Activated naive CD4-positive, alpha-beta T cell treated with anti-CD3 and anti-CD28 coated beads, Interleukin-2, amount 10 ng/mL, durations not matched to agents 7 days and 5 days (primary cell): ENCODE measurements at regions of chr1 and their contacts with region 1.

Region 1: DNA sequence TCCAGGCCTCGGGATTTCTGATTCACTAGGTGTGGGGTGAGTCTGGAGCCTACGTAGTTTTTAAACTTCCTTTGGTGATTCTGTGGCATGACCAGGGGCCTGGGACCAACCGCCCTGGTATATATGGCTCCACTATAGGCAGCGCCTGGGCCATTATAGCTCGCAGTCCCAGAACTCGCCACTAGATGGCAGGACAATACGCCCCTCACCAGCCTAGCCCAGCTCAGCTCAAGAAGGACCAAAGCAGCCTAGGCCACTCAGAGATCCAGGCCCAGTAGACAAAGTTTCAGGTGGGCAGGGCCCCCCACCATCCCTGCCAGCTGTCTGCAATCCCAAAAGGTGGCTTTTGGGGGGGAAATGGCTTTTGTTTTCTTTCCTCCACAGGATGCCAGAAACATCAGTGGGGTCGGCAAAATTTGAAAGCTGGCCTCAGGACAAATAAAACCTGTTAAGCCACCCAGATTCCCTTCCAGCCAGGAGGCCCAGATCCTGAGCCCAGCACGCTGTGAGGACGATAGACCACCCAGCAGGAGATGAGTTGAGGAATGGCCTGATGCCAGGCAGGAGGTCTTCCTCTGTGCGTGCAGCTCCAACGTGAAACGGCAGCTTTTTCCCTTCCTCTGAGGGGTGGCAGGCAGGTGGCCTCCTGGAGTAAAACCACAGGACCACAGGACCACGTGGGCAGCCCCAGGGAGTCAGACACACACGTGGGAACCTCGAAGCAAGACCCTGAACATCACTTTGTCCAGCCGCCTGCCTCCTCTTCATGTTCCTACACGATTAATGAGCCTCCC is 24.8 kb upstream of the TMEM51 start:
- DNase-seq: peak; percentile 80
- H3K4me3 Mint-ChIP-seq: no peak overlapping the region
- H3K27ac Mint-ChIP-seq: no peak overlapping the region
- H3K4me1 Mint-ChIP-seq: no peaks in the 10 kb centered on the region
- H3K27me3 Mint-ChIP-seq: peaks cover 29% of the 10 kb centered on the region

Region 2: GRCh38 chr1:15014516-15014915 is 114.2 kb before region 1 on chr1:
- CTCF ChIA-PET with region 1: no interaction called
- DNase-seq: no peak
- H3K4me3 Mint-ChIP-seq: no peak overlapping the region
- H3K27ac Mint-ChIP-seq: no peak overlapping the region
- H3K4me1 Mint-ChIP-seq: no peaks in the 10 kb centered on the region
- H3K27me3 Mint-ChIP-seq: peaks cover 4% of the 10 kb centered on the region

Region 3: DNA sequence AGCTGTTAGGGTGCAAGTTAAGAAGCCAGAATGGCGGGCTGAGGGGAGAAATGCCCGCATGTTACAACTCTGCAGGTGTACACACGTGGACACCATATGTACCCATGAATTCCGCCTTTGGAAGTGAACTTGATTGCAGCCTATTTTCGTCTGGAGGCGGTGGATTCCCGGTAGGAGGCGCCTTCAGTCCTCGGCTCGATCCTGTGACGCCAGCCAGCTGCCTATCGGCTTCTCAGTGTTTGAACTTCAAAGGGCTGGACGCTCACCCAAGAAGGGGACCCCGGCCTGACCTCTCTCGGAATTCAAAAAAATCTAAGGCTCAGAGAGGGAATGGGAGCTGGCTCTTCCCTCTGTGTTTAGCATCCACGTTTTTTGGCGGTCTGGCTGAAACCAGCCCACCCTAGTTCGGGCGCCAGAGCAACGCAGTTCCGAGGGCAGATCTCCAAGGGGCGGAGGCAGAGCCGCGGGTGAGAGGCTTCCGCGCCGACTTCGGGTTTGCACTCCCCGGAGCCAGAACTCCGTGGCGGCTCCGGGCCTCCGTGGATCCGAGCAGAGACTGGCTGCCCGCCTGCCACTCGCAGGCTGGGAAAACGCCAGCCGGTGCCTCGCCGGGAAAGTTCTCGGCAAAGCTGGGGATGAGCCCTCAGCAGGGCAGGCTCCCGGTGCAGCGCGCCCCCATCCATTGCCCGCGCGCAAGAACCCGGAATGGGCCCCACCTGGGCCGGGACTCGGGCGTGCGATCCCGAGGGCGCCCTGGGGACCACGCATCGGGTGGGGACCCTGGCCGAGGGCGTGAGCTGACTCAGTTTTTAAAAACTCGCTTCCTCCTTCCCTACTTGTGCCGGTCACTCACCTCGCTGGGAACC is 23.8 kb after region 1 on chr1:
- CTCF ChIA-PET with region 1: interaction called, 19 read pairs
- DNase-seq: peak; percentile 46
- H3K4me3 Mint-ChIP-seq: peak overlapping the region; percentile 41
- H3K27ac Mint-ChIP-seq: no peak overlapping the region
- H3K4me1 Mint-ChIP-seq: peaks cover 36% of the 10 kb centered on the region
- H3K27me3 Mint-ChIP-seq: peaks cover 87% of the 10 kb centered on the region

Region 4: DNA sequence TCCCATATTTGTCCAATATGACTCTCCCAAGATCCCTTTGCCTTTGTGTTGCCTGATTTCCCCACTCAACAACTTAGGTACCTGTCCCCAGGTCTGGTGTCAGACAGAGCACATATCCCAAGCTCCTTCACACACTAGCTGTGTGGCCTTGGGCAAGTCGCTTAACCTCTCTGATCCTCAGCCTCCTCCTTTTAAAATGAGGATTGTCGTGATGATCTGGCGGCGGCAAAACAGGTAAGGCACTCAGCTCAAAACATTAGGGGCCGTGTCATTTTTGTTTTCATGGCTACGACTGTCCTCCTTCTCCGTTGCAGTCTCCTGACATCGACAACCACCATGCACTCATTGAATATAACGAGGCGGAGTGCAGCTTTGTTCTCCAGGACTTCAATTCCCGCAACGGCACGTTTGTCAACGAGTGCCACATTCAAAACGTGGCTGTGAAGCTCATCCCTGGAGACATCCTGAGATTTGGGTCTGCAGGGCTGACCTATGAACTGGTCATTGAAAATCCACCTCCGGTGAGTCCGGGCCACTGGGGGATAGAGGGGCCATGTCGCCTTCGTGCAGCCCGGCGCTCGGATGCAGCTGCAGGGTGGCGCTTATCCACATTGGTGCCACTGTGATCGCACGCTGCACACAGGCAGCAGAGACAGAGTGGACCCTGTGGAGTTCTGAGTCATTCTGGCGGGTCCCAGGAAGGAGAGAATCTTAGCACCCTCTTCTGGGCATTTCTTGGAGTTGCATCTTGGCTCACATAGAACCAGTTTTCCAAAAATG is 143.5 kb after region 1 on chr1:
- CTCF ChIA-PET with region 1: interaction called, 92 read pairs
- DNase-seq: peak; percentile 58
- H3K4me3 Mint-ChIP-seq: no peak overlapping the region
- H3K27ac Mint-ChIP-seq: no peak overlapping the region
- H3K4me1 Mint-ChIP-seq: peaks cover 2% of the 10 kb centered on the region
- H3K27me3 Mint-ChIP-seq: peaks cover 47% of the 10 kb centered on the region

Region 5: DNA sequence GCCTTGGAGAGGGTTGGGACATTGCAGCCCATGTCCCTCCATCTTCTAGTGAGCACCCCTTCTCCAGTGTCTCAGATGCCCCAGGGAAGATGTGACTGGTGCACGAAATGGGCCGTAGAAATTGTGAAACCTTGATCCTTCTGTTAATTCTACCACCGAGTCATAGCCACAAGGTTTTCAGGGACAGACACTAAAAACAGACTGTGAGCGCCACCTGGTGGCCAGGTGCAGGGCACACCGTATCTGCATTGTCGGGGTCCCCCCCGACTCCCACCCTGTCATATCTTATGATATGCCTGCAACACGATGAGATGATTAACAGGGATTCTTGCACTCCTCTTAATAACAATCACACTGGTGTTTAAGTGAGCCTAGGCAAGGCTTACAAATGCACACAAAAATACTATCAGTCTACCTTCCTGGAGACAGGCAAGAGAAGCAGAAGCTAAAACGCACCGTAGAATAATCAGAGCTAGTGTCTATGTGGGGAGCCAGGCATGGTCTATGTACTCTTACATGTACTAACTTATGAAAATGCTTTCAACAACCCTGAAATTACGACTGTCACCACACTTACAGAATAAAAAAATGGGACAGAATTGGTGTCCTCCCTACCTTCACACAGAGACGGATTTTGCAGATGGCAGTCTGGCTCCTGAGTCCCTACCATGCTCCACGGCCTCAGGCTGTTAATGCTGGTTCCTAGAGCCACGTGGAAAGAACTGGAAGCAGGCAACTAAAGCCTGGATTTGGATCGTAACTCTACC is 176.2 kb after region 1 on chr1:
- CTCF ChIA-PET with region 1: interaction called, 50 read pairs
- DNase-seq: peak; percentile 78
- H3K4me3 Mint-ChIP-seq: no peak overlapping the region
- H3K27ac Mint-ChIP-seq: no peak overlapping the region
- H3K4me1 Mint-ChIP-seq: no peaks in the 10 kb centered on the region
- H3K27me3 Mint-ChIP-seq: peaks cover 20% of the 10 kb centered on the region